ENCODE measurements at regions of chr4 and their contacts with region 1.

Region 1: DNA sequence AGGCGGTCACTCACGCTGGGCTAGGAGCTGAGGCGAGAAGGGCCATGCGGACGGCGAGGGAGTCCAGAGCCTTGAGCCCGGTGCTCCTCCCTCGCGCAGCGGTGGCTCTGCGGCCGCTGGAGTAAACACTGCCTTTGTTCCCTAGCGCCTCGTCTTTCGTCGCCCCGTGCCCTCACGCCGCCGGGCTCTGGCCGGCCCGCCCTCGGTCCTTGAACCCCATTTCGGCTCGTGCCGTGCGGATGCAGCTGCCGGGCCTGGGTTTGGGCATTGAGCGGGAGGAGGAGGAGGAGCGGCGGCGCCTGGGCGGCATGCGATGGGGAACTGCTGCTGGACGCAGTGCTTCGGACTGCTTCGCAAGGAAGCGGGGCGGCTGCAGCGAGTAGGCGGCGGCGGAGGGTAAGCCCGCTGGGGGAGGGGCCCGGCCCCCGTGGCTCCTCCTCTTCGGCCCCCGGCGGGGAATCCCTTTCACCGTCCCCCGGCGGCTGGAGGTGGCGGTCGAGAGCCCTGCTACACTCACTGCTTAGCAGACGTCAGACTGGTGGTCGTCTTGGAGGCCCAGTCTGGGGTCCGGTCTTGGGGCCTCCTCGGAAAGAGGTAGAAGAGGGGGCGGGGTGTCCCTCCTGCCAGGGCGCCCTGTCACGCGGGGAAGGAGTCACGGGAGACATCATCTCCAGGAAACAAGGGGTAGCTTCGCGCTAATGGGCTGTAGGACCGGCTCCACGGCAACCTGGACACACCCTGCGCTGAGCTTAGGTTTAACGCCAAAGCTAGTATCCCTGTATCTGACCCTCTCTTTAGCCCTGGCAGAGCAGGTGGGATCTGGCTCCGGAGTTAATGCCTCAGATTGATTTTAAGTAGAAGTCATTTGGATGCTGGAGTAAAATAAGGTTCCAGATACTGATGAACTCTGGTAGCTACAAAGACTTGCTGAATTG is at the start of gene AP1AR:
- DNase-seq: peak; percentile 77 to 86 (median 79)
- H3K4me3 ChIP-seq: peak within 1 kb of the TSS; percentile 84 to 90
- H3K4me3 Mint-ChIP-seq: peak within 1 kb of the TSS; percentile 93 to 99 (median 96)
- H3K27ac ChIP-seq: peak within 1 kb of the TSS; percentile 92
- H3K27ac Mint-ChIP-seq: peak within 1 kb of the TSS; percentile 98 to 100 (median 100)
- H3K4me1 ChIP-seq: peaks cover 40% of the 10 kb centered on the region
- H3K4me1 Mint-ChIP-seq: peaks cover 18 to 45% (median 26%) of the 10 kb centered on the region in 4 donors
- H3K27me3 ChIP-seq: no peaks in the 10 kb centered on the region
- H3K27me3 Mint-ChIP-seq: no peaks in the 10 kb centered on the region
- total RNA-seq, gene AP1AR: 20.3 to 22.8 TPM

Region 2: DNA sequence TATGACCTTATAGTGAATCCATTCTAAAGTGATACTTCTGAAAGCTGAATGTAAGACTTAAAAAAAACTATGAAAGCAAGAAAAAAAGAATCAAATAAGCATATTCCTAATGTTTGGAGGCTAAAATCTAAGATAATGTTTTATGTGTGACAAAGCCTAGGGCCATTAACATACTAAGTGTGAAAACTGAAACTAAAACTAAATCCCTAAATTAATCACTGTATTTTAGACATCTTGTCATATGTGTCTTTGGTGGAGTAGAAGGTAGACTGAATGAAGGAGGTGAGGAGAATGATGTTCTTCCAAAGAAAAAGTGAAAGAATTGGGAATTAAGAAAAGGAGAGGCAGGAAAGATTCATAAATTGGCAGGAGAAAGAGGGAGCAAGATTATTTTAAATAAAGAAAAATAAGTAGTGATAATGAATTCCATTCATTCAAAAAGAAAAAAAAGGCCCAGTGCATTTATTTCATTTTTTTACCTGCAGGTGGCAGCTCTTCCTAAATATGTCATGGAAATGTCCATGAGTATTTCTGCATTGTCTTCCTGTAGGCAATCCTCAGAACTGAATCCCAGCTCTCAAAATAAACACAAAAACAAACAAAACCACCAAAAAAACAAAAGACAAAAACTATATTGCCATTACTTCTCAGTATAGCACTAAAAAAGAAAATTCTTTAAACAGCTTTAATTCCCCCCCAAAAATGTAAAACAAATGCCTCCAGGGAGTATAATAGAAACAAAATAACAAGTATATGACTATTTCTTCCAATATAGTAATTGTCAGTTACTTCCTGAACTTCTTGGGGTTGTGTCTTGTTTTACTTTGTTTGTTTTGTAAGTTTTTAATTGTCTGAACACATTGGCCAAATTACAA is 17.4 kb before region 1 on chr4:
- CTCF ChIA-PET with region 1: interaction called, 223 read pairs
- POLR2A ChIA-PET with region 1: interaction called, 4 read pairs
- intact Hi-C with region 1: loop called (anchors 1 kb)
- DNase-seq: peak in 4 of 5 donors; percentile 17 to 24 (median 20)
- H3K4me3 ChIP-seq: no peak overlapping the region
- H3K4me3 Mint-ChIP-seq: no peak overlapping the region
- H3K27ac ChIP-seq: no peak overlapping the region
- H3K27ac Mint-ChIP-seq: peak overlapping the region in 2 of 7 donors; percentile 2 to 26
- H3K4me1 ChIP-seq: no peaks in the 10 kb centered on the region
- H3K4me1 Mint-ChIP-seq: peaks cover 0 to 5% (median 2%) of the 10 kb centered on the region in 4 donors
- H3K27me3 ChIP-seq: no peaks in the 10 kb centered on the region
- H3K27me3 Mint-ChIP-seq: no peaks in the 10 kb centered on the region

Region 3: DNA sequence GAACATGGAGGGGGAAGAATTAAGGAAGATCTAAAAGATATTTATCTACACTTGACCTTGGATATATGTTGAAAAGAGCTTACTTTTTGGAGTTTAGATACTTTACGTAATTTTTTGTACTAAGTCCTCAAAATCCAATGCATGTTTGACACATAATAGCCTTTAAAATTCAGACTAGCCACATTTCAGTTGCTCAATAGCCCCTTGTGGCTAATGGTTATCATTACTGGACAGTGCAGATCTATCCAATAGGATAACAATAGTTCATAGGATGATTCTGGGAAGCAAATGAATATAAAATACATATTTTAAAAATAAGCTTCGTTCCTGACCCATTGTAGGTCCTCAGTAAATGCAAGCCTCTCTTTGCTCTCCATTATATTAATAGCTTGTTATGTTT is 13.3 kb after region 1 on chr4:
- CTCF ChIA-PET with region 1: interaction called, 15 read pairs
- POLR2A ChIA-PET with region 1: interaction called, 5 read pairs
- intact Hi-C with region 1: no loop called
- DNase-seq: no peak
- H3K4me3 ChIP-seq: no peak overlapping the region
- H3K4me3 Mint-ChIP-seq: no peak overlapping the region
- H3K27ac ChIP-seq: no peak overlapping the region
- H3K27ac Mint-ChIP-seq: no peak overlapping the region
- H3K4me1 ChIP-seq: no peaks in the 10 kb centered on the region
- H3K4me1 Mint-ChIP-seq: peaks cover 0 to 11% (median 5%) of the 10 kb centered on the region in 4 donors
- H3K27me3 ChIP-seq: no peaks in the 10 kb centered on the region
- H3K27me3 Mint-ChIP-seq: no peaks in the 10 kb centered on the region

Region 4: DNA sequence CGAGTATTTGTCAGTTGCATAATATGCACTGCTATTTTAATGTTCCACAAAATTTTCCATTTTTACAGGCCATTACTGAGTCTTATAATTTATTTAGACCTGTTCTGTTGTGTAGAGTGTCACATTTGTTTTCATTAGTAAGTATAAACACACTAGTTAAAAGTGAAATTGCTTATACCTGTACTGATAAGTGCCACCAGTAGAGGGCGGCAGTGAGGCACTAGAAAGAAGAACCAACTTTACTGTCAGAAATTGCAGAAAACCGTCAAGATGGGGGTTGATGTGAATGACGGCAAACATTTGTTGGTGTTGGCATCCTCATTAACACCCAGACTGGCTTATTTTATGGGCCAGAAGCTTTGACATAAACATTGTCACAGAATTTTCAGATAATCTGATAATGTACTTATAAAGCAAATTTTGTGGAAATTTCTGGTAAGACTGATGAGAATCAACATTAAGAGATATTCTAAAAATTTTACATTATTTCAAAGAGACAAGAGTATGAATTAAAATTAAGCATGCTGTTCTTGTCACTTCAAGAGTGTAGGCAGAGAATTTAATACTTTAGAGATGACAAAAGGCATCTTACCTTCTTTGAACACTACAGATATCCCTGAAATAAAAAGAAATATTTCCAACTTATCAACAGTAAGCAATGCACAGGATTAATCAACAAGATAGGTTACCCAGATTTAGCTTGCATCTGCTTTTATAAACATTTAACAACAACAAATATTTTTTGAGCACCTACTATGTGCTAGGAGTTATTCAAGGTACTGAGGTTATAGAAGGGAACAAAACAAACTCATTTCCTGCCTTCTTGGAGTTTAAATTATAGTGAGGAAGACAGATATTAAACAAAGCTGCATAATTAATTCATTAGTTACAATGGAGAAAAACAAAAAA is 90.0 kb after region 1 on chr4:
- CTCF ChIA-PET with region 1: interaction called, 8 read pairs
- POLR2A ChIA-PET with region 1: no interaction called
- intact Hi-C with region 1: loop called (anchors 1 kb)
- DNase-seq: peak; percentile 71 to 80 (median 73)
- H3K4me3 ChIP-seq: no peak overlapping the region
- H3K4me3 Mint-ChIP-seq: peak overlapping the region in 7 of 8 donors; percentile 33 to 73 (median 51)
- H3K27ac ChIP-seq: no peak overlapping the region
- H3K27ac Mint-ChIP-seq: peak overlapping the region in 2 of 7 donors; percentile 46 to 77
- H3K4me1 ChIP-seq: peaks cover 8% of the 10 kb centered on the region
- H3K4me1 Mint-ChIP-seq: peaks cover 5 to 15% (median 8%) of the 10 kb centered on the region in 4 donors
- H3K27me3 ChIP-seq: no peaks in the 10 kb centered on the region
- H3K27me3 Mint-ChIP-seq: no peaks in the 10 kb centered on the region

Region 5: GRCh38 chr4:112515304-112516067 is 283.4 kb after region 1 on chr4:
- CTCF ChIA-PET with region 1: no interaction called
- POLR2A ChIA-PET with region 1: no interaction called
- intact Hi-C with region 1: loop called (anchors 2 kb)
- DNase-seq: peak in 3 of 5 donors; percentile 49 to 57 (median 55)
- H3K4me3 ChIP-seq: peak overlapping the region in 1 of 2 donors; percentile 37
- H3K4me3 Mint-ChIP-seq: peak overlapping the region; percentile 87 to 98 (median 92)
- H3K27ac ChIP-seq: no peak overlapping the region
- H3K27ac Mint-ChIP-seq: peak overlapping the region in 5 of 7 donors; percentile 37 to 87 (median 75)
- H3K4me1 ChIP-seq: peaks cover 52% of the 10 kb centered on the region
- H3K4me1 Mint-ChIP-seq: peaks cover 31 to 79% (median 48%) of the 10 kb centered on the region in 4 donors
- H3K27me3 ChIP-seq: peaks cover 78% of the 10 kb centered on the region
- H3K27me3 Mint-ChIP-seq: peaks cover 74 to 75% of the 10 kb centered on the region in 2 donors

Measured in CD4-positive, alpha-beta memory T cell (primary cell).